Gastrocnemius medialis (tissue), 4 donors: ENCODE measurements at regions of chr3 and their contacts with region 1.

Region 1: DNA sequence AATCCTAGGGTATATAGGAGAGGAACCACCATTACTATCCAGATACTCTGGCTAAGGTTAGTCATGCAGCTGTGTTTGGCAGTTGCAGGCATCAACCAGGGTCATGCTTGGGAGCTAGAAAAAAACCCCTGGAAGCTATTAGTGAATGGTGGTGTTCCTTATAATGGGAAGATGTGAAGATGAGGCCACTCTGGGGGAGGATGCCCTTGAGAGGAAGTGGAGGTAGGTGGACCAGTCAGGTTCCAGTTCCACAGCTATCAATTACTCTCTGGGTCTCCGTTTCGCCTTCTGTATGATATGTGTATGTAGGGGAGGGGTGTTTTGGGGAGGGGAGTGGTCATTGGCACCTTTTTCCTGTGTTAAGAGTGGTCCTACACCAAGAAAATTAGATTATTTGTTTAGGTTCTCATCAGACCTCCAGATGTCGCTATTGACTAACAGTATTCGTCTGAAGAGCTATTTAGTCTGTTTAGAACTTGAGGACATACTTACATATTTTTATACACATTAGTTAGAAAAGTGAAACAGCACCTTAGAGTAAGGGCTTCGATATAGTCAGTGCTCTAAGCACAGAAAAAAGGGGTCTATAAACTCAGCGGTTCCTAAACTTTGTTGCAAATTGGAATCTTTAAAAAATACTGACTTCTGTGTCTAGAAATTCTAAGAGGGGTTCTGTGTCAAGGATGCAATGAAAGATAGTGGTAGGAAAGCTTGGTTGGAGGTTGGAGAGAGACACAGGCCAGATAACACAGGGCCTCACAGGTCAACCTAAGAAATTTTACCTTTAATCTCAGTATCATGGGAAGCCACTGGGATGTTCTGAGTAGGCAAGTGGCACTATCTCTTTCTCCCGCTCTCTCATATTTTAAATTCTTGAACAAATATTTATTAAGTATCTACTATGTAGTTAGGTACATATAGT is 9.1 kb upstream of the HPS3 start:
- DNase-seq: no peak
- ATAC-seq: peak; percentile 72 to 78
- H3K4me3 ChIP-seq: no peak overlapping the region
- H3K27ac ChIP-seq: no peak overlapping the region
- H3K4me1 ChIP-seq: no peaks in the 10 kb centered on the region
- H3K27me3 ChIP-seq: no peaks in the 10 kb centered on the region
- CTCF ChIP-seq: peak; percentile 48 to 74 (median 65)
- POLR2A ChIP-seq: no peak

Region 2: DNA sequence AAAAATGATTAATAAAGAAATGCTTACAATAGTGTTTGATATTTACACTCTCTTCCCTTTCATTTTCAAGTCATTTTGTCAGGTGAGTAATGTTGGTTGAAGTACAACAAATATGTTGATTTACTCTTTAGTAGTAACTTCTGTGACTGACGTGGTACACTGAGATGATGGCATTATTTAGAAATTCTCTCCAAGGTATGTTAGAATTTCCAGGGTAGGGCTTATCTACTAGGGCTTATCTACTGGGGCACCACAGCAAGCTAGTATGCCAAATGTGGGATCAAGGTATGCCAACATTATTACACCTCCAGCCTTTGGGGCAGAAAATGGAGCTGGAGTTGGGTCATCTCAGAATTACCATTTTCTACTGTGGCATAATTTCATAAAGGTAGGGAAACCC is 580.0 kb before region 1 on chr3:
- in situ Hi-C with region 1: no loop called
- intact Hi-C with region 1: no loop called
- DNase-seq: no peak
- ATAC-seq: no peak
- H3K4me3 ChIP-seq: no peak overlapping the region
- H3K27ac ChIP-seq: no peak overlapping the region
- H3K4me1 ChIP-seq: no peaks in the 10 kb centered on the region
- H3K27me3 ChIP-seq: no peaks in the 10 kb centered on the region
- CTCF ChIP-seq: no peak
- POLR2A ChIP-seq: no peak

Region 3: GRCh38 chr3:148861277-148861869 is 258.9 kb before region 1 on chr3:
- in situ Hi-C with region 1: loop called in 2 of 4 experiments (anchors 25 kb)
- intact Hi-C with region 1: no loop called
- DNase-seq: no peak
- ATAC-seq: peak; percentile 72 to 78
- H3K4me3 ChIP-seq: no peak overlapping the region
- H3K27ac ChIP-seq: no peak overlapping the region
- H3K4me1 ChIP-seq: peaks cover 5% of the 10 kb centered on the region in 2 donors
- H3K27me3 ChIP-seq: no peaks in the 10 kb centered on the region
- CTCF ChIP-seq: peak; percentile 63 to 83 (median 78)
- POLR2A ChIP-seq: no peak

Region 4: GRCh38 chr3:149273096-149273751 is 152.9 kb after region 1 on chr3:
- in situ Hi-C with region 1: loop called (anchors 5 kb)
- intact Hi-C with region 1: loop called (anchors 1 kb)
- DNase-seq: peak in 1 of 2 donors; percentile 20
- ATAC-seq: peak; percentile 95 to 96
- H3K4me3 ChIP-seq: no peak overlapping the region
- H3K27ac ChIP-seq: peak overlapping the region in 2 of 4 donors; percentile 23 to 51
- H3K4me1 ChIP-seq: peaks cover 0 to 5% of the 10 kb centered on the region in 2 donors
- H3K27me3 ChIP-seq: no peaks in the 10 kb centered on the region
- CTCF ChIP-seq: peak; percentile 77 to 96 (median 89)
- POLR2A ChIP-seq: no peak

Region 5: DNA sequence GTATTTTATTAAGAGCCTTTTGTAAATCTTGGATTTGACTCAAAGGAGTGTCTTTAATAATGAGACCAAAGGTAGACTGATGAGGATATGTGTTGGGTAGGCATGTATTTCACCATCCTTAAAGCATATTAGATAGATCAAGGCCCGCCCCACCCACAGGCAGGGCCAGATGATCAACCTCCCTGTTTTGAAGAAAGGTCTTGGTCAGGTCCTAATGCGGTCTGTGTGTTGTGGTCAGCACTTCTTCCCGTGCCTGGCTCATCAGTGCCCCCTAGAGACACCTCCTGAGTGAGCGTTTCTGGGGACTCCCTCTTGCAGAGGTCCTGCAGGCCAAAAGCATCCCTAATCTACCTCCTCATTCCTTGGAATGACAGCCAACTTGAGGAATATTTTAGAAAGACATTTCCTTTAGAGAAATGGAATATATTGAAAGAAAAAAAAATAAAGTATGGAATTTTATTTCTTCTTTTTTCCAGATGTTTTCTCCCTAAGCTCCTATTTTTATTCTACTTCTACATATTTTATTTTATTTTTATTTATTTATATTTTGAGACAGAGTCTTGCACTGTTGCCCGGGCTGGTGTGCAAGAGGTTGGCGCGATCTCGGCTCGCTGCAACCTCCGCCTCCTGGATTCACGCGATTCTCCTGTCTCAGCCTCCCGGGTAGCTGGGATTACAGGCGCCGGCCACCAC is 360.2 kb after region 1 on chr3:
- in situ Hi-C with region 1: loop called in 3 of 4 experiments (anchors 25 kb)
- intact Hi-C with region 1: loop called (anchors 5 kb)
- DNase-seq: peak; percentile 54 to 74
- ATAC-seq: peak; percentile 90 to 96
- H3K4me3 ChIP-seq: no peak overlapping the region
- H3K27ac ChIP-seq: peak overlapping the region; percentile 34 to 75 (median 52)
- H3K4me1 ChIP-seq: peaks cover 9 to 16% of the 10 kb centered on the region in 2 donors
- H3K27me3 ChIP-seq: no peaks in the 10 kb centered on the region
- CTCF ChIP-seq: peak; percentile 55 to 84 (median 70)
- POLR2A ChIP-seq: no peak